ENCODE measurements at regions of chrX and their contacts with region 1.

Region 1: DNA sequence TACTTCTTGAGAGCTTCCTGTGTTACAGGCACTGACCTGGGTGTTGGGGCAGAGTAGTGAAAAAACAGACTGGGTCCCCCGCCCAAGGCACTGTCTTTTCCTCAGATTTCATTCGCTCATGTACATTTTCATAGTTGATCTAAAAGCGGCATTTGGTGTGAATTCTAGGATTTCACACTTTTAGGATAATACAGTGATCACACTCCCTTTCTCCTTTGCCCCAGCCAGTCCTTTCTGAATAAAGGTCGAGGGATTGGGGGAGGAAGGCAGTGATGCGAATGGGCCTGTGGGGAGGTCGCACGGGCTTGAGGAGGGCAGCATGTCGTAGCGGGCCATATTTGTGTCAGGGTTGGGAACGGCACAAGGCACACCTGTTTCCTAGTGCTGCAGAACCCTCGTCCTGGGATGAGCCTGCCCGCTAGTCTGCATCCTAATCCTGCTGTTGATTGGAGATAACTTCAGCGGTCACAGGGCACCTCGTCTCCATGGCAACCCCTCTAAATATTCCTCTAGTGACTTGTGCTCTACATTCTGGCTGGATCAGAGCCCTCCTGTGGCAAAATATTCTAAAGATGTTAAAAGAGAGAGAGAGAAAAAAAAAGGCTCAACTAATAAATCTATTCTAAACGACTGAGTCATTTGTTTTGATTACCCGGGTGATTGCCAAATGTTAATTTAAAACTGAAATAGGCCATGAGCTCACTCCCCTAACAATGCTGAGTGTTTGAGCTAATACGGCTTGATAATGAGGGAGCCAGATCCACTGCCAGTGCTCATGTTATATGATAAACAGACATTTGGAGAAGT is 21.8 kb downstream of the FHL1 start:
- DNase-seq: peak; percentile 70 to 80
- ATAC-seq: peak; percentile 80
- H3K4me3 ChIP-seq: no peak overlapping the region
- H3K27ac ChIP-seq: peak overlapping the region; percentile 24 to 99
- H3K4me1 ChIP-seq: no peaks in the 10 kb centered on the region
- H3K27me3 ChIP-seq: no peaks in the 10 kb centered on the region

Region 2: DNA sequence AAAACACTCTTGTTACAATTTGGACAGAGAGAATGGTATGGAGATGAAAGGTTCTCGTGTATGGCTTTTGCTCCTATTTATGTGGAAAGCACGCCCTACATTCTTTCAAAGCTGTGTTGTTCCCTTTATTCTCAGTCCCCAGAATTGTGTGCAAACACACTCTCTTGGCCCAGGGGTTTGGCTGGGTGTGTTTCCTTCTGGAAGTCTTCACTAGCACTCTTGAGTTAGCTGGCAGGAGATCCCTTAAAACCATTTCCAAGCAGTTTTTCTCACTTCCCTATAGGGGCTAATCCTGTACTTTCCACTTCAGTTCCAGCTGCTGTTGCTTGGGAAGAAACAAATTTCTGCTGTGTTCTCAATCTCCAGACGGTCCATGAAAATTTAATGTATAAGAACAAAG is 13.3 kb after region 1 on chrX:
- intact Hi-C with region 1: no loop called
- DNase-seq: no peak
- ATAC-seq: peak; percentile 53
- H3K4me3 ChIP-seq: no peak overlapping the region
- H3K27ac ChIP-seq: peak overlapping the region; percentile 43 to 68
- H3K4me1 ChIP-seq: peaks cover 0 to 3% of the 10 kb centered on the region in 2 donors
- H3K27me3 ChIP-seq: no peaks in the 10 kb centered on the region

Region 3: GRCh38 chrX:136200466-136200865 is 31.3 kb after region 1 on chrX:
- intact Hi-C with region 1: loop called (anchors 2 to 5 kb)
- DNase-seq: no peak
- ATAC-seq: no peak
- H3K4me3 ChIP-seq: peak overlapping the region; percentile 41 to 46
- H3K27ac ChIP-seq: peak overlapping the region; percentile 18 to 89
- H3K4me1 ChIP-seq: no peaks in the 10 kb centered on the region
- H3K27me3 ChIP-seq: no peaks in the 10 kb centered on the region

Region 4: DNA sequence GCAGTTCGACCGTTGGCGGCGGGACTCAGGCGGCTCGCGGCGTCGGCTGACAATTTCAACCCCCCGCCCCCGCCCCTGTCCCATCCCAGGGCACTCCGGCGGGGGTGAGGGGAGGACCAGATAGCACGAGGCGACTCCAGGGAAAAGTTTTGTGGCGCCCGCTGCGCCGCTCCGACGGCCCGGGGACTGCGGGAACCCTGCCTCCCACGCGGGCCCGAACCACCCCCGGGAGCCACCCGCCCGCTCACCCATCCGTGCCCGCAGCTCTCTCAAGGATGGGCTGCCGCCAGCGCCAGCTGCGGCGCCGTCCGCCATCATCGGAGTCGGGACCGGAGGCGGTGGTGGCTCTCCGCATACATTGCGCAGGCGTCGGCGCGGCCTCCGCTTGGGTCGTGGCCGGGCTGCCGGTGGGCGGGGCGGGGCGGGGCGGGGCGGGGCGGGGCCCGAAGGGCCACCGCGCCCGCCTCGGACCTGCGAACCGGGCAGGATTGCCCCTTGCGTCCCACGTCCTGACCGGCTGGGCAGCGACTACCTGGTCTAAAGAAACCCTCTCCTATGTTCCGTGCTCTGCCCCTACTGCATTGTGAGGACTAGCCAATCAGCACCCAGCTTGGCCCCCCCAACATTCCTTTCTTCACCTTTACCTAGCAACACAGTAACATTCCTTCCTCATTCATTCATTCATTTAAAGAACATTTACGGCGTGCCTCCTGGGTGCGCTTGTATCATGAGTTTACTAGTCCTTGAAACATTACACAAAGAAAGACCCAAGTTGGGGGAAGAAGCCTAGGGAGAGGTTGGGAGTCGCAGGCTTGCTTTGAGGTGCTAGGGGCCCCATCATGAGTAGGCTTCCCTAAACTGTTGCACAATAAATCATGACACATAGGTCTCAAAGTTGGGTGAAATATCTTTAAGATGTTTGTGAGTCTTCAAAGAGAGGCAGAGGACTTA is 82.2 kb after region 1 on chrX and contains the start of gene MAP7D3:
- intact Hi-C with region 1: loop called in 1 of 2 experiments (anchors 5 kb)
- DNase-seq: peak; percentile 70 to 88
- ATAC-seq: peak; percentile 80
- H3K4me3 ChIP-seq: peak within 1 kb of the TSS; percentile 69 to 84
- H3K27ac ChIP-seq: peak within 1 kb of the TSS; percentile 51 to 79
- H3K4me1 ChIP-seq: no peaks in the 10 kb centered on the region
- H3K27me3 ChIP-seq: no peaks in the 10 kb centered on the region
- total RNA-seq, gene MAP7D3: 28.5 to 30.9 TPM

Region 5: DNA sequence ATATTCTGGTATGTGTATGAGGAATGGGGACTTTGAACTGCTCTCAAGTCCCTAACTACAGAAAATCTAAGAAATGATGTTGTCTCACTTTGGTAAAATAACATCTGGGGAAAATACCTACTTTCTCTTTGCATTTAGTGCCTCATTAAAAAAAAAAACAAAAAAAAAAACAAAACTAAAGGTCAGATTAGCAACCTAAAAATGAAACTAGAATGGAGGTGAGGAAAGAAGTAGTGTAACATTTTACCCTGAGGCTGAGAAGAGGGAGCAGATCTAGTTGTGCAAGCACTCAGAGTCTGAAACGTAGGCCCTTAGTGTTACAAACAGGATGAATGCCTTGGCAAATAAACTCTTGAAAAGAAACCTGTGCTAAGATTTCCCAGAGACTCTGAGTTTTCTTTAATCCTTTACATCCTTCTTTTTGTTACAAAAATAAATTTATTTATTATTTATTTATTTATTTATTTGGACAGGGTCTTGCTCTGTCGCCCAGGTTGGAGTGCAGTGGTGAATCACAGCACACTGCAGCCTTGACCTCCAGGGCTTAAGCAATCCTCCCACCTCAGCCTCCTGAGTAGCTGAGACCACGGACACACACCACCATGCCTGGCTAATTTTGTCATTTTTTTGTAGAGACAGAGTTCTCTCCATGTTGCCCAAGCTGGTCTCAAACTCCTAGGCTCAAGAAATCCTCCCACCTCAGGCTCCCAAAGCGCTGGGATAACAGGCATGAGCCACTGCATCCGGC is 419.1 kb after region 1 on chrX:
- intact Hi-C with region 1: loop called in 1 of 2 experiments (anchors 5 kb)
- DNase-seq: no peak
- ATAC-seq: no peak
- H3K4me3 ChIP-seq: no peak overlapping the region
- H3K27ac ChIP-seq: no peak overlapping the region
- H3K4me1 ChIP-seq: no peaks in the 10 kb centered on the region
- H3K27me3 ChIP-seq: no peaks in the 10 kb centered on the region